ENCODE measurements at regions of chr12 and their contacts with region 1.

Region 1: DNA sequence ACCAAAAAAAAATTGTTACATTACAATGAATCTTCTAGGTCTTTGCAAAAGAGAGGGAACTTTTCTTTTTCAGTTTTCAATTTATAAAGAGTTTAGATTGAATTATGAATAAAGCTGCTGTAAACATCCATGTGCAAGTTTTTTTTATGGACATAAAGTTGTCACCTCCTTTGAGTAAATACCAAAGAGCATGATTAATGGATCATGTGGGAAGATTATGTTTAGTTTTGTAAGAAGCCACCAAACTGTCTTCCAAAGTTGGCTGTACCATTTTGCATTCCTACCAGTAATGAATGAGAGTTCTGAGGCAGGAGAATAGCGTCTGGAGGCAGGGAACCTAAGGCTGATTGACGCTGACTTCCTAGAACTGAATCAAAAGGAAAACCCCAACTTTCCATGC is 30.2 kb downstream of the LEMD3 start:
- DNase-seq: no peak
- ATAC-seq: no peak
- H3K4me3 ChIP-seq: no peak overlapping the region
- H3K4me3 Mint-ChIP-seq: no peak overlapping the region
- H3K27ac ChIP-seq: no peak overlapping the region
- H3K27ac Mint-ChIP-seq: no peak overlapping the region
- H3K4me1 ChIP-seq: no peaks in the 10 kb centered on the region
- H3K4me1 Mint-ChIP-seq: peaks cover 27 to 87% (median 75%) of the 10 kb centered on the region in 7 donors
- H3K27me3 ChIP-seq: no peaks in the 10 kb centered on the region
- H3K27me3 Mint-ChIP-seq: no peaks in the 10 kb centered on the region

Region 2: DNA sequence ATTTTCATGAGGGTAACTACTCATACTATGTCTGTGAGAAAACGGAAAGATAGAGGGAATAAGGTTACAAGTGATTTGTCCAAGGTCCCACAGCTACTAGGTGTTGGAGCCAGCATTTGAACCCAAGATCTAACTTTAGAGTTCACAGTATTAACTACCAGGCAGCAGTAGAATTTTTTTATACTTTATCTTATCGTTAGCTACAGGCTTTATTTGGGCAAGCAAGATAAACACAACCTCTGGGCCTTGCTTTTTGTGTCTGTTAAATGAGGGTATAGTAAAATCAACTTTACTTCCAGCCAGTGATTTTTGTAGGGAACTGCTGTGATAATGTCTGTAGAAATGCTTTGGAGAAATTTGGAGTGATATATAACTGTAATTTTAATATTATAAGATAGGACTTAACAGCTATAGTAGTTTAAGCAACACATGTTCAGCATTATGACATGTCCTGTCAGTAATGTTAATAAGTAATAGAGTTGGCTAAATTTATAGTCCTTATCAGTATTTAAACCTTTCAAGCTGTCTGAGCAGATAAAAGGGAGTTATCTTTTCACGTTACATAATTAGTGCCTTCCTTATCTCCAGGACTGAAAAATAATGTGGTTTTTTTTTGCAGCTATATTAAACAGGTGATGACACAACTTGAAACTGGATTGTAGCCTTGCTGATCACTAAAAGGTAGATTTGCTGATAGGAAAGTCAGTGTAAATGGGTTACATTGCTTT is 17.4 kb before region 1 on chr12:
- CTCF ChIA-PET with region 1: no interaction called
- POLR2A ChIA-PET with region 1: no interaction called
- intact Hi-C with region 1: loop called in 1 of 2 experiments (anchors 2 kb)
- DNase-seq: no peak
- ATAC-seq: peak; percentile 36
- H3K4me3 ChIP-seq: no peak overlapping the region
- H3K4me3 Mint-ChIP-seq: peak overlapping the region in 4 of 10 donors; percentile 19 to 56 (median 35)
- H3K27ac ChIP-seq: no peak overlapping the region
- H3K27ac Mint-ChIP-seq: peak overlapping the region in 1 of 9 donors; percentile 12
- H3K4me1 ChIP-seq: peaks cover 4 to 13% of the 10 kb centered on the region in 2 donors
- H3K4me1 Mint-ChIP-seq: peaks cover 34 to 75% (median 64%) of the 10 kb centered on the region in 7 donors
- H3K27me3 ChIP-seq: no peaks in the 10 kb centered on the region
- H3K27me3 Mint-ChIP-seq: no peaks in the 10 kb centered on the region

Region 3: DNA sequence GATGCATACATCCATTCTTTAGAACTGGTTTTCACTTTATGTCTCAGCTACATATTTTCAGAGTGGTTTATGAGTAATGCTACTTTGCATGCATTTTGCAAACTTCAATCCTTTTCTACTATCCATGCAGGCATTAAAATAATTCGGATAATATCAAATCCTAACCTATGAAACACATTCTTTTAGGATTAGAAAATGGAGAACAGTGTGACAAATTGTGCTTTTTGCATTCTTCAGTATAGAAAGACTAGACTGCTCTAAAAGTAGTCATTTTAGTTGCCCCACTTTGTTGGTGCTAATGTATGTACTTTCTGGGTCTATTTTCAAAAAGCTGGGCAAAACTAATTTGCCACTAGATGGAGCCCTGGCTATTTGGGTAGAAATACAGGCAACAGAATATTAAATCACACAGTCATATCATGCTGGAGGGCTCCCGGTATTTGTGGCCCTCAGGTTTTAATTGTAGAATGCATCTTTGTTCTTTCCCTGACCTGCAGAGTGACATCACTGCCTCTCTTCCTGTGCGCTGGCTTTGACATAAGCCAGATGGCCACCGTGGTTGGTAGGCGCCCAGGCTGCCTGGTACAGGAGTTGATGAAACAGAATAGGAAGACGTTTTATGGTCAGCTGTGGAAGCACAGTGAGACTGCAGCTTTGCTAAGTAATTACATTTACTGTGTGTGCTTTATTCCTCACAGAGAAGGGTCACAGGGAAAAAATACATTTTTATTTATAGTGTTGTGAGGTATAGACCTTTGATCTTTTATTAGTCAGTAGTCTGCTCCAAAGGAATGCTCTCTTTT is 107.0 kb after region 1 on chr12:
- CTCF ChIA-PET with region 1: no interaction called
- POLR2A ChIA-PET with region 1: no interaction called
- intact Hi-C with region 1: no loop called
- DNase-seq: no peak
- ATAC-seq: peak; percentile 32
- H3K4me3 ChIP-seq: no peak overlapping the region
- H3K4me3 Mint-ChIP-seq: no peak overlapping the region
- H3K27ac ChIP-seq: no peak overlapping the region
- H3K27ac Mint-ChIP-seq: no peak overlapping the region
- H3K4me1 ChIP-seq: no peaks in the 10 kb centered on the region
- H3K4me1 Mint-ChIP-seq: peaks cover 0 to 18% (median 9%) of the 10 kb centered on the region in 7 donors
- H3K27me3 ChIP-seq: no peaks in the 10 kb centered on the region
- H3K27me3 Mint-ChIP-seq: peaks cover 20 to 31% (median 23%) of the 10 kb centered on the region in 5 donors